CD14-positive monocyte (primary cell): ENCODE measurements at regions of chr2 and their contacts with region 1.

Region 1: GRCh38 chr2:181466661-181467576 is 9.7 kb downstream of the ITGA4 start:
- DNase-seq: peak; percentile 48 to 67 (median 64)
- H3K4me3 ChIP-seq: no peak overlapping the region
- H3K4me3 Mint-ChIP-seq: no peak overlapping the region
- H3K27ac ChIP-seq: no peak overlapping the region
- H3K27ac Mint-ChIP-seq: peak overlapping the region in 2 of 7 donors; percentile 15 to 71
- H3K4me1 ChIP-seq: peaks cover 16 to 36% of the 10 kb centered on the region in 2 donors
- H3K4me1 Mint-ChIP-seq: peaks cover 53% of the 10 kb centered on the region
- H3K27me3 ChIP-seq: no peaks in the 10 kb centered on the region
- H3K27me3 Mint-ChIP-seq: no peaks in the 10 kb centered on the region
- CTCF ChIP-seq: peak; percentile 92

Region 2: DNA sequence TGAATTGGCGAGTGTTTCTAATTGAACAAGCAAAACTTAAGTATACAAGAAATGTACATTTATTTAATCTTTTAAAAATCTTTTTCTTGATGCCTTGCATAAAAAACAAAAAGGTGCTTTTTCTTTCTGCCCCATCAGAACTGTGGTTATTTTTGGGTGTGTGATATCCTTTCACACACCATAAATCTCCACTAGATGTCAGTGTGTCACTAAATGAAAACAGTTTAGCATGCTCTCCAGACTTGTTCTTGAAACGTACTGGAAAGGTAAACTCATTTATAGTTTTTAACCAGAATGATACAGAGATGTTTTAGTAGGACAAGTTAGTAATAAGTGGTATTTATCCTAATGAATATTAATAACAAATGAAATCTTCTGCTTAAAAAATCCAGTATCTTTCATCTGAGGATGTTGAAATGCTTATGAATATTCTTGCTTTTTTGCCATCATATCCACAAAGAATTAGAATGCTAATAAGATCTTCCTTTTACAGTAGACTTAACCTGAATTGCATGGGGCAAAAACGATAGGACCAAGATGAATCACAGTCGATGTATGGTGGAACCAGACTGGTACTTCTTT is 389.7 kb before region 1 on chr2:
- intact Hi-C with region 1: loop called in 1 of 2 experiments (anchors 10 kb)
- DNase-seq: peak; percentile 28 to 47 (median 44)
- H3K4me3 ChIP-seq: no peak overlapping the region
- H3K4me3 Mint-ChIP-seq: no peak overlapping the region
- H3K27ac ChIP-seq: no peak overlapping the region
- H3K27ac Mint-ChIP-seq: no peak overlapping the region
- H3K4me1 ChIP-seq: peaks cover 8 to 17% of the 10 kb centered on the region in 2 donors
- H3K4me1 Mint-ChIP-seq: peaks cover 11% of the 10 kb centered on the region
- H3K27me3 ChIP-seq: no peaks in the 10 kb centered on the region
- H3K27me3 Mint-ChIP-seq: no peaks in the 10 kb centered on the region
- CTCF ChIP-seq: peak; percentile 79

Region 3: GRCh38 chr2:181104512-181105115 is 362.3 kb before region 1 on chr2:
- intact Hi-C with region 1: loop called in 1 of 2 experiments (anchors 10 kb)
- DNase-seq: peak; percentile 16 to 49 (median 38)
- H3K4me3 ChIP-seq: no peak overlapping the region
- H3K4me3 Mint-ChIP-seq: peak overlapping the region in 1 of 2 donors; percentile 68
- H3K27ac ChIP-seq: no peak overlapping the region
- H3K27ac Mint-ChIP-seq: no peak overlapping the region
- H3K4me1 ChIP-seq: peaks cover 0 to 7% of the 10 kb centered on the region in 2 donors
- H3K4me1 Mint-ChIP-seq: peaks cover 10% of the 10 kb centered on the region
- H3K27me3 ChIP-seq: no peaks in the 10 kb centered on the region
- H3K27me3 Mint-ChIP-seq: peaks cover 0 to 4% (median 0%) of the 10 kb centered on the region in 3 donors
- CTCF ChIP-seq: peak; percentile 81

Region 4: DNA sequence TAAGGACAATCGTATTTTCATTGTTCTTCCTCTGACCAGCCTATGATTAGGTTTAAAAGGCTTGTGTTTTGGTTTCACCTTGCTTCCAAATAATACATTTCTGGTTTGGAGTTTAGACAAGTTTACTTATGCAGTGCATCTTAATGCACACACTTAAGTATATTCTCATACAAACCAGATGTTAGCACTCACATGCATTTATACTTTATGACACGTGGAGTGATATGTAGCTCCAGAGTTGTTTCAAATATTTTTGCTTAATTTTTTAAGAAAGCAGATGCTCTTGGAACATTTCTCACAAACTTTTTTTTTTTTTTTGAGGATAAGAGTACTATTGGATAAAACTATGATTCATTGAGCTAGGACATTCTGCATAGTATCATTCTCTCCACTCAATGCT is 850.0 kb after region 1 on chr2:
- intact Hi-C with region 1: no loop called
- DNase-seq: no peak
- H3K4me3 ChIP-seq: no peak overlapping the region
- H3K4me3 Mint-ChIP-seq: no peak overlapping the region
- H3K27ac ChIP-seq: no peak overlapping the region
- H3K27ac Mint-ChIP-seq: no peak overlapping the region
- H3K4me1 ChIP-seq: no peaks in the 10 kb centered on the region
- H3K4me1 Mint-ChIP-seq: no peaks in the 10 kb centered on the region
- H3K27me3 ChIP-seq: no peaks in the 10 kb centered on the region
- H3K27me3 Mint-ChIP-seq: no peaks in the 10 kb centered on the region
- CTCF ChIP-seq: no peak